CD4-positive, alpha-beta memory T cell (primary cell): ENCODE measurements at regions of chr1 and their contacts with region 1.

Region 1: GRCh38 chr1:31938174-31938950 is at the start of gene PTP4A2:
- DNase-seq: peak; percentile 79 to 89 (median 80)
- H3K4me3 ChIP-seq: peak within 1 kb of the TSS; percentile 43 to 95
- H3K4me3 Mint-ChIP-seq: peak within 1 kb of the TSS; percentile 92 to 100 (median 98)
- H3K27ac ChIP-seq: peak within 1 kb of the TSS; percentile 70
- H3K27ac Mint-ChIP-seq: peak within 1 kb of the TSS; percentile 96 to 98 (median 97)
- H3K4me1 ChIP-seq: peaks cover 77% of the 10 kb centered on the region
- H3K4me1 Mint-ChIP-seq: peaks cover 43 to 88% (median 62%) of the 10 kb centered on the region in 4 donors
- H3K27me3 ChIP-seq: no peaks in the 10 kb centered on the region
- H3K27me3 Mint-ChIP-seq: no peaks in the 10 kb centered on the region
- total RNA-seq, gene PTP4A2: 254 to 276 TPM

Region 2: DNA sequence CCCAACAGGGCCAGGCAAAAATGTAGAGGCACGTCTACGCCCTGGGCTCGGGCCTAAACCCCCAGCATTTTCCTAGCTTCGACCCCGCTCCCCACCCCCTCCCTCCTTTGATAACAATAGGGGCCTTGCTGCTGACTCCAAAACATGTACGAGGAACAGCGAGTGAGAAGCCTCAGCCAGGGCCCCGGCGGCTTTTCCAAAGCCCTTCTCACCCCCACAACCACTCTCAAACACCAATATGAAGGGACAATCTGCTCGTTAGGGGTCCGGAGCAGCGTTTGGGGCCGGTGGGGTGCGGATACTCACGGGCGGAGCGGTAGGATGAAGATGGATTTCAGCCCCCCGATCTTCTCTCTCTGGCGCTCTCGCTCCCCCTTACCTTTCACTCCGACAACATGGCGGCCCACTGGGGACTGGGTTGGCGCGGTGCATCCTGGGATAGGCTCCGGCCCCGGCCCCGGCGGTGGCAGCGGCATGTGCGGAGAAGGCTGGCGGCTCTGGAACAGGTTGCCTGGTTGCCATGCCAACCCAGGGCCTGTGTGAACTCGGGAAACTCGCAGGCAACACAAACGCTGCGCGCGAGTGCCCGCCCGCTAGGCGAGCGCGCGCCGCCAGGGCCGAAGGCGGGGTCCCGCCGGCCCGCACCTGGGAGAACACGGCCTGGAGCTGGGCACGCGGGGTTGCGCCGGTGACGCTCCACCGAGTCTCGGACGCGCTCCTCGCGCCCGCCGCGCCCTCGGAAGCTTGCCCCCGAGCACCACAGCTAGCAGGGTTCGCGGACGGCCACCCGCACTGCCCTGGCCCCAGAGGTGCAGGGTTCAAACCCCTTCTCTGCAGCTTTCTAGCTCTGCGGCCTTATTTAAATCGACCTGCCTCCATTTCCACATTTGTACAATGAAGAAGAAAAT is 872.8 kb before region 1 on chr1 and contains the start of gene PUM1:
- CTCF ChIA-PET with region 1: no interaction called
- POLR2A ChIA-PET with region 1: no interaction called
- intact Hi-C with region 1: loop called (anchors 5 kb)
- DNase-seq: peak; percentile 97 to 99 (median 98)
- H3K4me3 ChIP-seq: peak within 1 kb of the TSS; percentile 76 to 100
- H3K4me3 Mint-ChIP-seq: peak within 1 kb of the TSS; percentile 92 to 100 (median 98)
- H3K27ac ChIP-seq: peak within 1 kb of the TSS; percentile 99
- H3K27ac Mint-ChIP-seq: peak within 1 kb of the TSS; percentile 95 to 100 (median 99)
- H3K4me1 ChIP-seq: peaks cover 37% of the 10 kb centered on the region
- H3K4me1 Mint-ChIP-seq: peaks cover 13 to 49% (median 26%) of the 10 kb centered on the region in 4 donors
- H3K27me3 ChIP-seq: no peaks in the 10 kb centered on the region
- H3K27me3 Mint-ChIP-seq: no peaks in the 10 kb centered on the region
- total RNA-seq, gene PUM1: 146 to 164 TPM

Region 3: DNA sequence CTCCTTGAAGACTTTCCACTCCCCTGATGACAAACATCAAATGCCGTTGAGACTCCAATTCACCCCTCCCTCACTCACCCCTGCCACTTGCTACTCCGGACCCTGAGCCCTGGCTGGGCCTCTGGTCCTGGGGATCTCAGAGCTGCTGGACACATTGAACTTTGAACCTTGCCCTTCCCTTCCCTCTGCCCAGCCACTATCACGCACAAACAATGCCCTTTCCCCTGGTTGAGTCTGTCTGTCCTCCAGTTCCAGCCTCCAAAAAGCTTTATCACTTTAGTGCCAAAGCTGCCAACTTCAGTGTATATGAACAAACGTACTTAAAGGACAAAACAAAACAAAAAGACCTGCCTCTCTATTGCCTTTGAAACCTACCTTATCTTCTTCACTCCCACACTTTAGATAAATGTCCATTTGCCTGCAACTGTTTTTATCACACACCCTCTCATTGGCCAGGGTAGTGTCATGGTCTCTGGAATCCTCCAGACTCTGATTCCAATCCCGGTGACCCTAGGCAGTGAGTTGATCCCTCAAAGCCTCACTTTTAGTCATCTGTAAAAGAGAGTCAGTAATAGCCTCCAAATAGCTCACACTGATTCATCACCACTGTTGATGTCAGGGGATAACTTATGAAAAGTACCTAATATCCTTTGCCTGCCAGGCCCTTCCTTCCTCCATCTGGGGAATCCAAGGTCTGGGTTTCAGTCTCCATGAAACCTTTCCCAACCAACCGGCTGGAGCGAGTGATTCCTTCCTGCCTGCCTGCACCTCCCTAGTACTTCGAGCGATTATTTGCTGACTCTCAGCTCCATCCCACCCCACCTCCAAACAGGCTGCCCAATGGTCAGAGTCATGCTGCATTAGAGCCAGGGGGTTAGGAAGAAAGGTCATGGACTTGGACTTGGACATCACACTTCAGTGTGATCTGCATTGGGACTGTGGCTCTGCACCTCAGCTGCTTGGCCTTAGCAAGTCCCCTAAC is 106.7 kb before region 1 on chr1:
- CTCF ChIA-PET with region 1: interaction called, 6 read pairs
- POLR2A ChIA-PET with region 1: interaction called, 33 read pairs
- intact Hi-C with region 1: loop called (anchors 1 kb)
- DNase-seq: no peak
- H3K4me3 ChIP-seq: no peak overlapping the region
- H3K4me3 Mint-ChIP-seq: no peak overlapping the region
- H3K27ac ChIP-seq: no peak overlapping the region
- H3K27ac Mint-ChIP-seq: peak overlapping the region in 2 of 7 donors; percentile 13 to 27
- H3K4me1 ChIP-seq: peaks cover 27% of the 10 kb centered on the region
- H3K4me1 Mint-ChIP-seq: peaks cover 24 to 36% (median 27%) of the 10 kb centered on the region in 4 donors
- H3K27me3 ChIP-seq: no peaks in the 10 kb centered on the region
- H3K27me3 Mint-ChIP-seq: no peaks in the 10 kb centered on the region

Region 4: GRCh38 chr1:31923901-31924535 is 14.3 kb before region 1 on chr1:
- CTCF ChIA-PET with region 1: interaction called, 16 read pairs
- POLR2A ChIA-PET with region 1: interaction called, 190 read pairs
- intact Hi-C with region 1: loop called (anchors 1 kb)
- DNase-seq: no peak
- H3K4me3 ChIP-seq: no peak overlapping the region
- H3K4me3 Mint-ChIP-seq: peak overlapping the region; percentile 59 to 89 (median 80)
- H3K27ac ChIP-seq: peak overlapping the region; percentile 22
- H3K27ac Mint-ChIP-seq: peak overlapping the region; percentile 50 to 92 (median 81)
- H3K4me1 ChIP-seq: peaks cover 85% of the 10 kb centered on the region
- H3K4me1 Mint-ChIP-seq: peaks cover 53 to 88% (median 71%) of the 10 kb centered on the region in 4 donors
- H3K27me3 ChIP-seq: no peaks in the 10 kb centered on the region
- H3K27me3 Mint-ChIP-seq: no peaks in the 10 kb centered on the region

Region 5: GRCh38 chr1:31984419-31985347 is 46.3 kb after region 1 on chr1:
- CTCF ChIA-PET with region 1: interaction called, 7 read pairs
- POLR2A ChIA-PET with region 1: interaction called, 13 read pairs
- intact Hi-C with region 1: no loop called
- DNase-seq: peak in 2 of 5 donors; percentile 20 to 50
- H3K4me3 ChIP-seq: peak overlapping the region in 1 of 2 donors; percentile 21
- H3K4me3 Mint-ChIP-seq: peak overlapping the region in 6 of 8 donors; percentile 45 to 79 (median 57)
- H3K27ac ChIP-seq: peak overlapping the region; percentile 67
- H3K27ac Mint-ChIP-seq: peak overlapping the region; percentile 85 to 97 (median 94)
- H3K4me1 ChIP-seq: peaks cover 61% of the 10 kb centered on the region
- H3K4me1 Mint-ChIP-seq: peaks cover 41 to 71% (median 55%) of the 10 kb centered on the region in 4 donors
- H3K27me3 ChIP-seq: no peaks in the 10 kb centered on the region
- H3K27me3 Mint-ChIP-seq: no peaks in the 10 kb centered on the region

Region 6: DNA sequence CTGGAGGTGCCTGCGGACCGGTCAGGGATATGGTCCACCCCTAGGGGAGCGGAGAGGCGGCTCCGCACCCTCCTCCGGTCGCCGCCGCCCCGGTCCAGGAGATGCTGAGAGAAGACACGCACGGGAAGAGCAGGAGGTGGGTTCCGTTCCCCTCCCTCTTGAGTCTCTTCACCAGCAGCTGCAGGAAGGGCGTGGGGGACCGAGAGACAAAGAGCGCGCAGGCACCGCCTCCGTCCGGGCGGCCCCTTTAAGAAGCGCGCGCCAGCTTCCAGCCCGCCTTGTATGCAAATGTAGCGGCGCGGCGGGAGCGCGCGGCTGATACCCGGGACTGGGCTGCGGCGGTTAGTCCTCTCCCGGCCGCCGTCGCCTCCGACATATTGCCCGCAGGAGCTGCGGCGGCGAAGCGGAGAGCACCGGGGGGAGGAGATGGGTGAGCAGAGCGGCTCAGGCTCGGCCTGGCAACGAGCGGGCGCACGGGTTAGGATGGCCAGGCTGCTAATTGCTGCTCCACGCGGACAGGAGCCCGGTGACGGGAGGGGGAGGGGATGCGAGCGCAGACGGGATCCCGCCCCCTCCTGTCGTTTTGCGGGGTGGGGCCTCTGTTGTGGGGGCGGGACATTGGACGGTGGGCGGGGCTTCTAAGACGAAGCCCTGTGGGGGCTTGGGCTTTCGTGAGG is 134.4 kb after region 1 on chr1 and contains the start of gene TMEM39B:
- CTCF ChIA-PET with region 1: no interaction called
- POLR2A ChIA-PET with region 1: interaction called, 19 read pairs
- intact Hi-C with region 1: no loop called
- DNase-seq: peak; percentile 94 to 97 (median 96)
- H3K4me3 ChIP-seq: peak within 1 kb of the TSS; percentile 95
- H3K4me3 Mint-ChIP-seq: peak within 1 kb of the TSS; percentile 84 to 98 (median 92)
- H3K27ac ChIP-seq: peak within 1 kb of the TSS; percentile 73
- H3K27ac Mint-ChIP-seq: peak within 1 kb of the TSS; percentile 80 to 99 (median 97)
- H3K4me1 ChIP-seq: peaks cover 35% of the 10 kb centered on the region
- H3K4me1 Mint-ChIP-seq: peaks cover 26 to 52% (median 41%) of the 10 kb centered on the region in 4 donors
- H3K27me3 ChIP-seq: no peaks in the 10 kb centered on the region
- H3K27me3 Mint-ChIP-seq: no peaks in the 10 kb centered on the region
- total RNA-seq, gene TMEM39B: 18.4 to 19.1 TPM

Region 7: GRCh38 chr1:32539584-32540571 is 601.5 kb after region 1 on chr1:
- CTCF ChIA-PET with region 1: no interaction called
- POLR2A ChIA-PET with region 1: no interaction called
- intact Hi-C with region 1: no loop called
- DNase-seq: no peak
- H3K4me3 ChIP-seq: no peak overlapping the region
- H3K4me3 Mint-ChIP-seq: peak overlapping the region; percentile 68 to 91 (median 86)
- H3K27ac ChIP-seq: no peak overlapping the region
- H3K27ac Mint-ChIP-seq: peak overlapping the region in 2 of 7 donors; percentile 38 to 68
- H3K4me1 ChIP-seq: peaks cover 4% of the 10 kb centered on the region
- H3K4me1 Mint-ChIP-seq: peaks cover 5 to 19% (median 8%) of the 10 kb centered on the region in 4 donors
- H3K27me3 ChIP-seq: peaks cover 22% of the 10 kb centered on the region
- H3K27me3 Mint-ChIP-seq: peaks cover 46 to 47% of the 10 kb centered on the region in 2 donors